Cardiac septum (tissue), 1 donor: ENCODE measurements at regions of chr7 and their contacts with region 1.

Region 1: GRCh38 chr7:5367661-5368060 is 56.0 kb downstream of the TNRC18 start:
- DNase-seq: no peak

Region 2: GRCh38 chr7:4700577-4701235 is 667.0 kb before region 1 on chr7:
- intact Hi-C with region 1: no loop called
- DNase-seq: no peak

Region 3: GRCh38 chr7:5143935-5144903 is 223.4 kb before region 1 on chr7:
- intact Hi-C with region 1: no loop called
- DNase-seq: no peak

Region 4: GRCh38 chr7:5243261-5243660 is 124.4 kb before region 1 on chr7:
- intact Hi-C with region 1: loop called (anchors 5 kb)
- DNase-seq: no peak

Region 5: DNA sequence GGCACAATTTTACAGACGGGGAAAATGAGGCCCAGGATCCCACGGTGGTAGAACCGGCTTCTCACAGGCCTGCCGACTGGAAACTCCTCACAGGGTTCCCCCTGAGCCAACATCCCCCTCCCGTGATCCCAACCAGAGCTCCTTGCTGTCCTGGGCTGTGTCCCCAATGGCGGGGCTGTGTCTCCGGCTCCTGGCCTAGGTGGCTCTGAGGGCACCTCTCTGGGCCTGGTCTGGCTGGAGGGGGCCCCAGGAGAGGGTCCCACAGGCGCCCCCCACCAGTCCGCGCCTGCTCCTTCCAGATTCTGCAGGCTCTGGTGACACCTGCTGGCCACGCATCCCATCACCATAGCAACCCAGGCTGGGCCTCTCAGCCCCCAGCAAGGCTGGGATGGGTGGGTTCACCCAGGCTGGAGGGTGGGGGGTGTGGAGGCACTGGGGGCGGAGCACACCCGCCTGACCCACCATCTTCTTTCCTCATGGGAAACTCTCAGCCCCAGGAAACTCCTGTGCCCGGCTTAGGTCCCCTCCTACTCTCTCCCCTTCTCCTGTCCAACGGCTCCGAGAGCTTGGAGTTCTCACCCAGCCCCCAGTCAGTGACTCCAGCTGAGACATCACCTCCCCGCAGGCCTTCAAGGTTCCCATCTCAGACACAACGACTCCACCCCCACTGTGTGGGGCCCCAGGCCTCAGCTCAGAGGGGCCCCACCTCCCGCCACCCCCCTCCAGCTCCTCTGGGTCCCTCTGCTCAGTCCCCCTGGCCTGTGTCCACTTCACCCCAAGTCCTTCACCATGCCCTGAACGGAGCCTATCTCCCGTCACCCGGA is 83.1 kb after region 1 on chr7:
- intact Hi-C with region 1: loop called (anchors 2 kb)
- DNase-seq: peak; percentile 83